MCF 10A (cell line): ENCODE measurements at regions of chr17 and their contacts with region 1.

Region 1: DNA sequence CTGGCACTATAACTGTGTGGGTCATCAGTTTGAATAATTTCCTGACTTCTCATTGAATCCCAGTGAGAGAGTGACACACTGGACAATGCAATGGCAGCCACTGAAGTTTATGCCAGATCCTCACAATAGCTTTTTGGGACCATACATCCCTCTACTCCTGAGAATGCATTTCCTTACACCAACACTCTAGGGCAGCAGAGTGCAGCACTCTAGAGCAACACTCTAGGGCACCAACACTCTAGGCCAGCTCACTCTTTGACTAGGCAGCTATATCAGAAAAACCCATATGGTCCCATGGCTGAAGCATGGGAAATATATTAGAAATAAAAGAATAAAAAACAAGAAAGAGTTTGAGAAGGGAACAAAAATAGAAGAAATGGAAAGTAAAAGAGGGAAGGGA is 309.2 kb downstream of the MAP2K6 start:
- DNase-seq: peak; percentile 36
- H3K4me3 Mint-ChIP-seq: no peak overlapping the region
- H3K27ac Mint-ChIP-seq: peak overlapping the region; percentile 64
- H3K4me1 Mint-ChIP-seq: peaks cover 18% of the 10 kb centered on the region
- H3K27me3 Mint-ChIP-seq: no peaks in the 10 kb centered on the region
- CTCF ChIP-seq: peak; percentile 24

Region 2: GRCh38 chr17:69501591-69502468 is 221.9 kb before region 1 on chr17:
- CTCF ChIA-PET with region 1: no interaction called
- POLR2A ChIA-PET with region 1: no interaction called
- intact Hi-C with region 1: no loop called
- DNase-seq: peak; percentile 65
- H3K4me3 Mint-ChIP-seq: peak overlapping the region; percentile 57
- H3K27ac Mint-ChIP-seq: peak overlapping the region; percentile 65
- H3K4me1 Mint-ChIP-seq: peaks cover 21% of the 10 kb centered on the region
- H3K27me3 Mint-ChIP-seq: no peaks in the 10 kb centered on the region
- CTCF ChIP-seq: no peak

Region 3: GRCh38 chr17:69870091-69870530 is 146.4 kb after region 1 on chr17:
- CTCF ChIA-PET with region 1: no interaction called
- POLR2A ChIA-PET with region 1: no interaction called
- intact Hi-C with region 1: no loop called
- DNase-seq: peak; percentile 24
- H3K4me3 Mint-ChIP-seq: no peak overlapping the region
- H3K27ac Mint-ChIP-seq: no peak overlapping the region
- H3K4me1 Mint-ChIP-seq: peaks cover 31% of the 10 kb centered on the region
- H3K27me3 Mint-ChIP-seq: no peaks in the 10 kb centered on the region
- CTCF ChIP-seq: no peak

Region 4: GRCh38 chr17:69898601-69899000 is 174.9 kb after region 1 on chr17:
- CTCF ChIA-PET with region 1: no interaction called
- POLR2A ChIA-PET with region 1: no interaction called
- intact Hi-C with region 1: no loop called
- DNase-seq: no peak
- H3K4me3 Mint-ChIP-seq: no peak overlapping the region
- H3K27ac Mint-ChIP-seq: no peak overlapping the region
- H3K4me1 Mint-ChIP-seq: peaks cover 9% of the 10 kb centered on the region
- H3K27me3 Mint-ChIP-seq: no peaks in the 10 kb centered on the region
- CTCF ChIP-seq: no peak

Region 5: DNA sequence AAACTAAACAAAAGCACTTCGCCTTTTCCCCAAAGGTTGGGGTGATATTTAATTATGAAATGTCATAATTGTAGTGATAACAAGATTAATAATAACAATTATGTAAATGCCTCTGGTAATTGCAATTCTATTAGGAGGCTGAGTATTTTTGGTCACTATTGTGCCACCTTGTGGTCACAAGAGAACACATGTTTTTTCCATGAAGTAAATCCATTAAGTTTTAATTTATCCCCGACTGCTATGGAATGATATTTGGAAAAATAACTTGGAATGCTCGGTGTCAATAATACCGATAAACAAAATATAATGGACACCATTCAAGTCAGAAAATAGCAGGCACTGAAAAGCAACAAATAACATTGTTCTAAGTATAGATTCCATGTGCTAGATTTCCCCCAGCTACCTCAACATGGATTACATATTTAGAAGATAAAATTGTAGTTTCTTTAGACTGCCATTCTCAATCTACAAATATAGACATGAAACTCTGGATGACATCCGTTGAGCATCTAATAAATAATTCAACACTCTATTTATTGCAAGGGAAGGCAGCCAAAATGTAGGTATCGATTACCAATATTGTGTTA is 420.6 kb after region 1 on chr17:
- CTCF ChIA-PET with region 1: no interaction called
- POLR2A ChIA-PET with region 1: no interaction called
- intact Hi-C with region 1: loop called (anchors 1 kb)
- DNase-seq: peak; percentile 49
- H3K4me3 Mint-ChIP-seq: no peak overlapping the region
- H3K27ac Mint-ChIP-seq: peak overlapping the region; percentile 33
- H3K4me1 Mint-ChIP-seq: no peaks in the 10 kb centered on the region
- H3K27me3 Mint-ChIP-seq: no peaks in the 10 kb centered on the region
- CTCF ChIP-seq: peak; percentile 44